Mammary epithelial cell (primary cell): ENCODE measurements at regions of chr20 and their contacts with region 1.

Region 1: DNA sequence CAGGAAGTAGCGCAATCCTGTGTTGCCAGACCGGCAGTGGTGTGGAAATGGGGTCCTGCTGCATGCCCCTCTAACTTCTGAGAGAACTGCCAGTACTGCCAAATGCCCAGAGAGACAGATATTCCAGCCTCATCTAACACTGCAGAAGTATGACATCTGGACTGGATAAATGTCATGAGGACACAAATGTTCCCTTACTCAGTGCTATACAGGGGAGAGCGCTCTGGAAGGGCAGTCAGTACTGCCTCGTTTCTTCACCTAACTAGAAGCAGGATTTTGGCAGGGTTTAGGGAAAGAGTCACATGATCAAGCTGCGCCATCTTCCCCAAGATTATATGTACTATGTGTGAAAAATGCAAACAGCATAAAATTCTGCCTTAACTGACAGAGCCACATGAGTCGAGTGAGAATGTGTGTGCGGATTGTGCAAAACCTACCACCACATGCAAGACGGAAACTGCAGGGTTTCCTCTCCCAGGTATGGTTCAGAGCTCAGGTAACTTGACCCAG is 59.7 kb downstream of the B4GALT5 start:
- DNase-seq: no peak
- H3K4me3 ChIP-seq: no peak overlapping the region
- H3K27ac ChIP-seq: no peak overlapping the region
- H3K4me1 ChIP-seq: no peaks in the 10 kb centered on the region
- H3K27me3 ChIP-seq: no peaks in the 10 kb centered on the region
- CTCF ChIP-seq: no peak

Region 2: GRCh38 chr20:49739042-49739441 is 85.1 kb after region 1 on chr20:
- CTCF ChIA-PET with region 1: no interaction called
- dilution Hi-C with region 1: loop called (anchors 5 kb)
- in situ Hi-C with region 1: no loop called
- intact Hi-C with region 1: no loop called
- DNase-seq: no peak
- H3K4me3 ChIP-seq: no peak overlapping the region
- H3K27ac ChIP-seq: no peak overlapping the region
- H3K4me1 ChIP-seq: no peaks in the 10 kb centered on the region
- H3K27me3 ChIP-seq: no peaks in the 10 kb centered on the region
- CTCF ChIP-seq: no peak